ENCODE measurements at regions of chr15 and their contacts with region 1.

Region 1: DNA sequence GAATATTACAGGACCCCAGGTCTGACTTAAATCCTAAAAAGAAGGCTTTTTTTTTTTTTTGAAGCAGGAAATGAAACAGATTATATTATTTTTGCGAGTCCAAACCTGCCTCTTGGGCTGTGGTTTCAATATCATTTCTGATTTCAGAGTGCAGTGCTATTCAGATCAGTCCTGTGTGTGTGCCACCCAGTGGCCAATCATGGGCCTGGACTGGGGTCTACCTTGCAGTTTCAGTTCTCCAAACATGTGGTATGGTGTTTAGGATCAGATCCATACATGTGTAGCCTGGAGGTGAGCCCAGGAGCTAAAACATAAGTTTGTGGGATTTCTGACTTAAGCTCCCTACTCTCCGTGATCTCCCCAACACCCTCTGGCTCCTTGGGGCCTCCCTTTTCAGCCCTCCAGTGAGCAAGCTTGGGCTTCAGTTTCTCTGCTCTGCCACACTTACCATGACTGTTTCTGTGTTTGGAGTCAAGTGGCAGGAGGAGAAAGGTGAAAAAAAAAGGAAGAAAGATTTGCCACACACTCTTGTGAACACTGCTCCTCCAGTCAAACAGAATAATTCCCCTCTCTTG is 12.1 kb upstream of the THSD4 start:
- DNase-seq: peak; percentile 23
- H3K4me3 ChIP-seq: no peak overlapping the region
- H3K27ac ChIP-seq: no peak overlapping the region
- H3K4me1 ChIP-seq: no peaks in the 10 kb centered on the region
- H3K27me3 ChIP-seq: no peaks in the 10 kb centered on the region
- CTCF ChIP-seq: peak; percentile 67

Region 2: DNA sequence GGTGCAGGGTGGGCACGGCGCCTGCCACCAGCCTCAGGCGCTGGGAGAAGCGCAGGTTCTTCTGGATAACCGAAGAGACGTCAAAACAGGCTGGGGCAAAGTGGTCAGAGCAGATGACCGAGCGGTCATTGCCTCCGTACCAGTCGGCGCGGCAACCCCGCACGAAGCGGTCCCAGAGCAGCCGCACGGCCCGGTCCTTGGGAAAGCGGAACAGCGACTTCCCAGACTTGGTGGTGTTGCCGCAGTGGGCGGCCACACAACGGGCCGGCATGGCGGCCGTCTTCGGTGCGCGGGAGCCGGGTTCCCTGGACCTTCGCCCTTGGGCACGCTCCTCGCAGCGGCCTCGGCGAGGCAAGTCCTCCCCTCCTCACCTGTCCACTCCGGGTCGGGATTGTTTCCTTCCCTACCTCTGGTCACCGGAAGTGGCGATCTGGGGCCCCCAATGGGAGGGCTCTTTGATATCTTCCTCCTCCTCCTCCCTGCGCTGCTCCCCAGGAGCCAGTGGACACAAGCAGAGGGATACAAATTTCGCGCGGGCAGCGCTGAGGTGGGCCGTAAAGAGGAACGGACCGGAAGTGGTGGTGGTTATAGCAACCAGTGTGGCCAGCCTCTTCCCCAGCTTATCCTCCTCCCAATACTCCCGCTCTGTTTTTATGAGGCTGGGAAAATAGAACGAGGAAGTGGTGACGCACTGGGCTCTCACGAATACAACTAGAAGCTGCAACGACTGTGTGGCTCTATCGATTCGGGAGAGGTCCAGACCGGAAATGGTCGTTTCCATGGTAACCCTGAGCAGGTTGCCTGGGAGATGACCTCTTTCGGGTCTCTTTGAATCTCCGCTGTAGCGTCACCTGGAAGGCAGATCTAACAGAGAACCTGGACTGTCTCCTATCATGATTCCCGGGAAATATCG is 210.9 kb before region 1 on chr15 and contains the starts of genes LRRC49 and THAP10:
- intact Hi-C with region 1: loop called (anchors 10 kb)
- DNase-seq: peak; percentile 85
- H3K4me3 ChIP-seq: peak within 1 kb of the TSS; percentile 82
- H3K27ac ChIP-seq: peak within 1 kb of the TSS; percentile 78
- H3K4me1 ChIP-seq: peaks cover 26% of the 10 kb centered on the region
- H3K27me3 ChIP-seq: no peaks in the 10 kb centered on the region
- CTCF ChIP-seq: no peak
- total RNA-seq, gene LRRC49: 86.6 TPM
- total RNA-seq, gene THAP10: 5.6 TPM

Region 3: GRCh38 chr15:71011503-71012155 is 91.6 kb before region 1 on chr15:
- intact Hi-C with region 1: loop called (anchors 10 kb)
- DNase-seq: no peak
- H3K4me3 ChIP-seq: peak overlapping the region; percentile 62
- H3K27ac ChIP-seq: peak overlapping the region; percentile 60
- H3K4me1 ChIP-seq: peaks cover 8% of the 10 kb centered on the region
- H3K27me3 ChIP-seq: no peaks in the 10 kb centered on the region
- CTCF ChIP-seq: peak; percentile 78

Region 4: GRCh38 chr15:71437404-71438318 is 334.5 kb after region 1 on chr15:
- intact Hi-C with region 1: loop called (anchors 10 kb)
- DNase-seq: no peak
- H3K4me3 ChIP-seq: no peak overlapping the region
- H3K27ac ChIP-seq: no peak overlapping the region
- H3K4me1 ChIP-seq: peaks cover 7% of the 10 kb centered on the region
- H3K27me3 ChIP-seq: no peaks in the 10 kb centered on the region
- CTCF ChIP-seq: no peak